ENCODE measurements at regions of chr6 and their contacts with region 1.

Region 1: DNA sequence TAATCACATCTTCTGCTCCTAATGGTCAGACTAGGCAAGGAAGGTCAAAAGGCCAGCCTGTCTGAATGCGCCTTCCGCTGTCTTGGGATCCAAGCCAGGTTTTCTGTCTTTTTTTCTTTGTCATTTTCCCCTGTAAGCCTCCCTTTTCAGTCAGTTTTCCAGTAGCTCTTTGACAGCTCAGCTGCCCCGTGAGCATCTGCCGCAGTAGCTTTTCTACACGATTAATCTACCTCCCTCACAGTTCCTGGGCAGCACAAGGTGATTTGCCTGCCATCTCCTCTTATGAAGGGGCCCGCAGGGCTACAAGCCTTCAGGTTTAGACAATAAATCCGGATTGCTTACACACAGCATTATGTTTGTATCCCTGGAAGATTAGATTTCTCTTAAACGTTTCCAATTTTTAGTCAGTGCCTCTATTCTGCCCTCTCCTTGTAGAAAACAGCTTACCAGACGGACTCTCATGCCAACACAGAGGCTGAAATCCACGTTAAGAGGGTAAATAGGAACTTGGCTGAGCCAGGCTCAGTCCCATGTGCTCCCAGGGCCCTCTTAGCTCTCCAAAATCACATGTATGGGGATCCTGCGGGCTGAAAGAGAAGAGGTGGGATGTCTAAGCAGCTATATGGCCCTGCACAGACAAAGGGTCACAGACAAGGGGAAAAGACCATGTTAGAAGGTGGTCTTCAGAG is 77.2 kb downstream of the LY86 start:
- DNase-seq: peak in 1 of 4 experiments; percentile 55
- ATAC-seq: peak; percentile 68
- H3K4me3 ChIP-seq: no peak overlapping the region
- H3K27ac ChIP-seq: no peak overlapping the region
- H3K4me1 ChIP-seq: peaks cover 5 to 23% of the 10 kb centered on the region in 2 experiments; a peak in 4 of 5 replicates
- H3K27me3 ChIP-seq: peaks cover 0 to 13% of the 10 kb centered on the region in 2 experiments; a peak in 2 of 5 replicates
- CTCF ChIP-seq: no peak
- EP300 ChIP-seq: no peak
- POLR2A ChIP-seq: no peak
- RAD21 ChIP-seq: no peak

Region 2: DNA sequence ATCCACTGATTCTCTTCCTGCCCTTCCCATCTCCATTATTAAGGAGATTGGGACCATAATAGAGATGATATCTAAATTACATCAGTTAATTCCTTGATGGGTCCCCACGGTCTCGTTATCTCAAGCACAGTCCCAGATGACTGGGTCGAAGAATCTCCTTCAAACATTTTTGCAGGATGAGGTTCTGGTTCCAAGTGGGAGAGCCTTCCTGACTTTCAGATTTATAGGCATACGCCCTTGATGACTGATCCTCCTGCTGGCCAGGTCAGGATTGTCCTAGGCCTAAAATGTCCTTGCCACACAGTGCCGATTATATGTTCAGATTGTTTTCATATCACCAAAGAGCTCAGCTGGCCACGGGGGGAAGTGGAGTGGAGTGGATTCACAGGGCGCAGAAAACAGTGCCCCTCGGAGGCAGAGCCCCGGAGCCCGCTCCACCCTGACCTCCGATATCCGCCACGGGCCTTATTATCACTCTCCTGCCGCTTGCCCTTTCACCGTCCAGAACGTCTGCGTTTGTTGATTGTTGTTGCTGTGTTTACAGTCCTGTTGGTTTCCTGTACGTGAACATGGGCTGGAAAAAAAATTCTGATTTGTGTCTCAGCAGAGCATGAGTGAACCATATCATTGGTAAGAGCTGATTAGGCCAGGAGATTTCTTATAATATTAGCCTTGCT is 1069.1 kb after region 1 on chr6:
- CTCF ChIA-PET with region 1: no interaction called
- POLR2A ChIA-PET with region 1: no interaction called
- in situ Hi-C with region 1: loop called (anchors 5 kb)
- intact Hi-C with region 1: no loop called
- DNase-seq: no peak
- ATAC-seq: no peak
- H3K4me3 ChIP-seq: no peak overlapping the region
- H3K27ac ChIP-seq: no peak overlapping the region
- H3K4me1 ChIP-seq: peaks cover 0 to 6% of the 10 kb centered on the region in 2 experiments; a peak in 1 of 5 replicates
- H3K27me3 ChIP-seq: peaks cover 35 to 39% of the 10 kb centered on the region in 2 experiments
- CTCF ChIP-seq: no peak
- EP300 ChIP-seq: no peak
- POLR2A ChIP-seq: no peak
- RAD21 ChIP-seq: no peak

Region 3: GRCh38 chr6:7865781-7866180 is 1200.1 kb after region 1 on chr6:
- CTCF ChIA-PET with region 1: no interaction called
- POLR2A ChIA-PET with region 1: no interaction called
- in situ Hi-C with region 1: no loop called
- intact Hi-C with region 1: no loop called
- DNase-seq: no peak
- ATAC-seq: no peak
- H3K4me3 ChIP-seq: no peak overlapping the region
- H3K27ac ChIP-seq: no peak overlapping the region
- H3K4me1 ChIP-seq: peaks cover 0 to 4% of the 10 kb centered on the region in 2 experiments; a peak in 2 of 5 replicates
- H3K27me3 ChIP-seq: peaks cover 58 to 74% of the 10 kb centered on the region in 2 experiments
- CTCF ChIP-seq: peak in 1 of 3 experiments; percentile 9; a peak in 1 of 6 replicates
- EP300 ChIP-seq: no peak
- POLR2A ChIP-seq: no peak
- RAD21 ChIP-seq: peak in 1 of 2 experiments; percentile 38; a peak in 1 of 4 replicates

Measured in K562 (cell line).